Dendritic cell treated with granulocyte-macrophage colony-stimulating factor and Interleukin-4, amounts not matched to agents 40 ng/mL and 50 ng/mL, for 4 days (primary cell): ENCODE measurements at regions of chrX and their contacts with region 1.

Region 1: DNA sequence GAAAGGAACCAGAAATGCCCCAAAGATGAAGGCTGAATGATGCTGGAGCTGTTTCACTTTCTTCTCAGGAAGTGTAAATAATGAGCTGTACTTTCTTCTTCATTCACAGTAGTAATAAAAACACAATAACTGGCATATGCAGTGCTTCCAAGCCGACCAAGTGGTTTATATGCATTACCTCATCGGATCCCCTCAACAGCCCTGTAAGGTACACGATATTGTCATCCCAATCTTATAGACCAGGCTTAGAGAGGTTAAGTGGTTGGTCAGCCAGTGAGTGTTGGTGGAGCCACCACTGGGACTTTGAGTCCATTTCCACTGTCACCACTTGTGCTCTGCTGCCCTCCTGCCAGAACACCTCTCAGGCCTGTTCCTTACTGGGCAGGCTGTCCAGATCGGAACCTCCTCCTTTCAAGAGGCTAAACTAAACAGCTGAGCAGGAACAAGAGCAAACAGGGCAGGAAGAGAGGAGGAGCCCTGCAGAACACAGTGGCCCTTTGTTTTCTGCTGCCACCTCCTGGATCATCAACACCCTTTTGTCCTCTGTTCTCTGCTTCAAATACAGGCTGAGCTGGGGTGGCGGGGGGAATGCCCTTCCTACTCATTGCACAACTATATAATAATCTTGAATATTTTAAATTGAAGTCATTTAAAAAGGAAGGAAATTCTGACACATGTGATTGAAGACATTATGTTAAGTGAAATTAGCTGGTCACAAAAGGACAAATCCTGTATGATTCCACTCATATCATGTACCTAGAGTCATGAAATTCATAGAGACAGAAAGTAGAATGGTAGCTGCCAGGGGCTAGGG is 112.5 kb upstream of the ATP6AP2 start:
- H3K4me3 Mint-ChIP-seq: peak overlapping the region; percentile 9
- H3K27ac Mint-ChIP-seq: peak overlapping the region; percentile 56
- H3K4me1 Mint-ChIP-seq: peaks cover 50% of the 10 kb centered on the region
- H3K27me3 Mint-ChIP-seq: peaks cover 19% of the 10 kb centered on the region

Region 2: DNA sequence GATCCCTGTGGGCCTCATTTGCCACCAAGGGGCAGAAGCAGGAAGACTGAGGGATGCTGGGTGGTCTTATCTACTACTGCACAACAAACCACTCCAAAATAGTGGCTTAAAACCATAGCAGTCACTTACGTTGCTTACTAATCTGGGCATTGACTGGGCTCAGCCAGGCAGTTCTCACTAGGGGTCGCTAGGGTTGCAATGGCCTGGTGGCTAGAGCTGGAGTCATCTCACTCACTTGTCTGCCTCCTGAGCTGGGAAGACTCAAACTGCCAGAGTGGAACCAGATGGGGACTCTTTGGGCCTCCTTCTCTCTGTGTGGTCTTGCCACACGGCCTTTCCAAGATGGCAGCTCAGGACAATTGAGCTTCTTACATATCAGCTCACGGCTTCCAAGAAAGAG is 154.2 kb before region 1 on chrX:
- intact Hi-C with region 1: loop called (anchors 1 kb)
- H3K4me3 Mint-ChIP-seq: no peak overlapping the region
- H3K27ac Mint-ChIP-seq: no peak overlapping the region
- H3K4me1 Mint-ChIP-seq: peaks cover 12% of the 10 kb centered on the region
- H3K27me3 Mint-ChIP-seq: no peaks in the 10 kb centered on the region

Region 3: GRCh38 chrX:40402831-40403533 is 65.3 kb before region 1 on chrX:
- intact Hi-C with region 1: loop called (anchors 10 kb)
- H3K4me3 Mint-ChIP-seq: no peak overlapping the region
- H3K27ac Mint-ChIP-seq: peak overlapping the region; percentile 62
- H3K4me1 Mint-ChIP-seq: peaks cover 18% of the 10 kb centered on the region
- H3K27me3 Mint-ChIP-seq: no peaks in the 10 kb centered on the region